BJ (cell line): ENCODE measurements at regions of chr1 and their contacts with region 1.

Region 1: GRCh38 chr1:150176593-150176992 is 26.9 kb downstream of the PLEKHO1 start:
- DNase-seq: no peak
- H3K4me3 ChIP-seq: no peak overlapping the region
- H3K27me3 ChIP-seq: no peaks in the 10 kb centered on the region
- CTCF ChIP-seq: no peak

Region 2: DNA sequence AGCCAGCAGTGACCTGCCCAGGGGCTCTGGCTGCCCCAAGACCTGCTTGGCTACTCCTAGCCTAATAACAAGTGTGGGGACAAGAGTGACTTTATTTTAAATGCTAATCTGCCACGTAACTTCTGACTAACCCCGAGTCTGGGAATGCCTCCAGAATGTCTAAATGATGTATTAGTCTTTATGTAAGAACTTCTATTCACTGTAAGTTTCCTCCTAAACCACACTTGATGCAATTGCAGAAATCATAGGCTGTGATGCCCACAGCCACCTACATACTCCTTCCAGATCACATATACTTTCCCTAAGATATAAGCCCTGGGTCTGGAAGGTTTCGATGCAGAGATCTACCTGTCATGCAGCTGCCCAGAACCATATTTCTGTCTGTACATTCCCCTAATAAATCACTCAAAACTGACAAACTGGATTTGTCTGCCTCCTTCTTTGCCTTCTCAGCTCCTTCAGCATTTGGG is 114.9 kb before region 1 on chr1:
- CTCF ChIA-PET with region 1: no interaction called
- POLR2A ChIA-PET with region 1: no interaction called
- DNase-seq: peak; percentile 85
- H3K4me3 ChIP-seq: no peak overlapping the region
- H3K27me3 ChIP-seq: no peaks in the 10 kb centered on the region
- CTCF ChIP-seq: no peak

Region 3: GRCh38 chr1:150162862-150163706 is 13.5 kb before region 1 on chr1:
- CTCF ChIA-PET with region 1: interaction called, 18 read pairs
- POLR2A ChIA-PET with region 1: no interaction called
- DNase-seq: peak; percentile 96
- H3K4me3 ChIP-seq: peak overlapping the region; percentile 15
- H3K27me3 ChIP-seq: no peaks in the 10 kb centered on the region
- CTCF ChIP-seq: peak; percentile 29; the same call in 1 of the 2 replicates